ENCODE measurements at regions of chr18 and their contacts with region 1.

Region 1: GRCh38 chr18:22563098-22563707 is 145.5 kb upstream of the CTAGE1 start:
- DNase-seq: no peak
- ATAC-seq: peak; percentile 62 to 71

Region 2: DNA sequence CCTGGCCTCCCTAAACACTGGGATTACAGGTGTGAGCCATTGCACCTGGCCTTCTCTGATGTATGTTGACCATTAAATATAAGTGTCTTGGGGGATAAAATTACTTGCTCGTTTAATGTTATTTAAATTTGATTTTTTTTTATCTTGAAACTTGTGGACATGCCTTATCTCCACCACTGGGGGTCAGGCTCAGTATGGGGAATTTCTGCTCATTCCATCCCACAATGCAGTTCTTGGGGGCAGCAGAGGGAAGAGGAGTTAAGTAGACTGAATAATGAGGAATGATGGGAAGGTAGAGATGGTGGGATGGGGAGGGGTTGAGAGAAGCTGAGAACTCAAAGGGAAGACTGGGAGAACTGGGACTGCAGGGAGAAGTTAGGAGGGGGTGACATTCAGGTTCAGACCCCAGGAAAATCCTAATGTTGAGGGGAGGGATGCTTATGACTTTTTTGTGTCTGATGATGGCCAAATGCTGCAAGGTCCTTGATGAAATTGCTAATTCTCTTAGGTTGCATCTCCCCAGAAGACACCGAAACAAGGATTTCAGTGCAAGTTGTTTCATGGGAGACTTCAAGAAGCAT is 648.4 kb before region 1 on chr18:
- intact Hi-C with region 1: loop called in 1 of 2 experiments (anchors 10 kb)
- DNase-seq: no peak
- ATAC-seq: peak; percentile 78 to 91

Region 3: DNA sequence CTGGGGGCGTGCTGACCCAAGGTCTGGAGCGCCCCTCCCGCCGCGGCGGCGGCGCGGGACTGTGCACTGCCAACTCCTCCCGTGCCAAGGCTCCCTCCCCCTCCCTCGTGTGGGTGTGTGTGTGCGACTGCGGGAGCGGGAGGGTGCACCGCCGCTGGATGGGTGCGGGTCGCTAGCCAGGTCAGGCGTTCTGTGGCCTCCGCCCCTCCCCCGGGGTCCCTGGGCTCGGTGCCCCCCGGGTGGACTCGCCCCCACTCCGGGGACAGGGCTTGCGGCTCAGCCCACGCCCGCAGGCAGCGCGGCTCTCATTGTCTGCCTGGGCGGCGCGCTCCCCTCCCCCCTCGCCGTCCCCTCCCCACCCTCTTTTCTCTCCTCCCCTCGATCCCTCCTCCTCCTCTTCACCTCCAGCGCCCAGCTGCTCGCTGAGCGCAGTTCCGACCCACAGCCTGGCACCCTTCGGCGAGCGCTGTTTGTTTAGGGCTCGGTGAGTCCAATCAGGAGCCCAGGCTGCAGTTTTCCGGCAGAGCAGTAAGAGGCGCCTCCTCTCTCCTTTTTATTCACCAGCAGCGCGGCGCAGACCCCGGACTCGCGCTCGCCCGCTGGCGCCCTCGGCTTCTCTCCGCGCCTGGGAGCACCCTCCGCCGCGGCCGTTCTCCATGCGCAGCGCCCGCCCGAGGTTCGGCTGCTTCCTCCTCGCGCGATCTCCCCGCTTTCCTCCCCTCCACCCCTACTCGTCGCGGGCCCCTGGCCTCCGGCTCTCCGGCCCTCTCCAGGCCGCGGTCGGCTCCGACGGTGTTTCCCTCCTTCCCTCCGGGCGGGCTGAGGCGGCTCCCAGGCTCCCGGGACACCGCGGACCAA is 394.0 kb before region 1 on chr18 and contains the start of gene GATA6:
- intact Hi-C with region 1: loop called (anchors 2 to 5 kb)
- DNase-seq: peak; percentile 95
- ATAC-seq: peak; percentile 73 to 80
- total RNA-seq, gene GATA6: 43.9 to 59.6 TPM

Region 4: DNA sequence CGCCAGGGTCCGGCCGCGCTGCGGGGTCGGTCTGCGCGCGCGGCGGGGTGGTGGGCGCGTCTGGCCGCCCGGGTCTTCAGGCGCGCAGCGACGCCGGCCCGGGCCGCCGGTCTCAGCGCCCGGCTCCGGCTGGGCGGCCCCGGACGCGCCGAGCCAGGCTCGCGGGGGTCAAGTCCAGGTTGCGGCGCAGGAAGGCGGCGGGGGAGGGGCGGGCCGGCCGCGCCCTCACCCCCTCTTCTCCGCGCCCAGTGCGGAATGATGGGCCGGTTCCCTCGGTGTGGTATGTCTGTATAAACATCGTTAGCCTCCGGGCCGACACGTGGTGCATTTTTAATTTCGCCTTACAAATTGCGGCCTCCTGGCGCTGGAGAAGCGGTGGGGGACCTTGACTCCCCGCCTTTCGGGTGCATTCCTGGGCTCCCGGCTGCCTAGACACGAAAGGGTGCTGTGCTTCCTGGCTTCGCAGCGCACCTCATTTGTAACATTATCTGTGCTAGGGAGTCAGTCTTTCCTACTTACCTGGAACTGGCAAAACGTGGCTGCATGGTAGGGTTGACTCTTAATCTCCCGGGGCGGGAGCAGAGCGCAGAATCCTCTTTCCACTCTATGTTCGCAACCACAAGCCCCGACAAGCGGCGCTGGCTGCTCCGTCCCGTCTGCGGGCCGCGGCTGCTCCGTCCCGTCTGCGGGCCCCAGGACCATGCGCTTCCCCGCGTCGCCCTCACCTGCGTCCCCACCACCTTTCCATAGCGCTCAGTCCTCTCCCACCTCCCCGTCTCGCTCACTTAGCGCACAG is 214.5 kb before region 1 on chr18:
- intact Hi-C with region 1: loop called in 1 of 2 experiments (anchors 5 kb)
- DNase-seq: peak; percentile 87
- ATAC-seq: peak; percentile 73 to 79

Region 5: DNA sequence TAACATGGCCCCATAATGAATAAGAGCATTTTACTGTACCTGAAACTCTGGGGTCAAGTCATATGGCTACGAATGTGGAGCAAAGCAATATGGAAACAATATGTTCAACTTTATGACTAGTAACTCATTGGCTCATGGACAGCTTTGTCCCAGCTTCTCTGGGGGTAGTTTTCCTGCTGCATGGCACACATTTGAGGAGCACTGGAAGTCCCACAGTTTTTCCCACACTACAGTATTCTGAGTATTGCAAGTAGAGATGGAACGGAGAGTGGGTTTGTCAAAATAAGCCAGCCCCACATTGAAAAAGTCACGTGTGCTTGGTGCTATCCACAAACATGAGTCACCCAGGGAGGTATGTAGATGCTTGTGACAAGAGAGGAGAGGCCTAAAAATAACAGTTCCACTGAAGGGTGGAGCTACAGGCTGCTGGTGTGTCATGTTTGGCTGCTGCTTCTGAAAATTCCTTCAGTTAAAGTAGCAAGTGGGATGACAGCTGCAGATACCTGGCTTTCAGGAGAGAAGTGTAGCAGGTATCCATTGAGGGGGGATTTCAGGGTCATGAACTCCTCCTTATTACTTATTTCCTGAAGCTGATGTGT is 97.2 kb before region 1 on chr18:
- intact Hi-C with region 1: loop called in 1 of 2 experiments (anchors 2 kb)
- DNase-seq: peak; percentile 41
- ATAC-seq: peak; percentile 87 to 90